Mammary epithelial cell (primary cell): ENCODE measurements at regions of chr1 and their contacts with region 1.

Region 1: GRCh38 chr1:204104133-204104871 is 31.4 kb downstream of the SOX13 start:
- DNase-seq: peak; percentile 17
- H3K4me3 ChIP-seq: no peak overlapping the region
- H3K27ac ChIP-seq: no peak overlapping the region
- H3K4me1 ChIP-seq: peaks cover 35% of the 10 kb centered on the region
- H3K27me3 ChIP-seq: no peaks in the 10 kb centered on the region
- CTCF ChIP-seq: no peak

Region 2: GRCh38 chr1:204003529-204003928 is 100.8 kb before region 1 on chr1:
- CTCF ChIA-PET with region 1: no interaction called
- dilution Hi-C with region 1: loop called (anchors 5 kb)
- in situ Hi-C with region 1: no loop called
- intact Hi-C with region 1: no loop called
- DNase-seq: no peak
- H3K4me3 ChIP-seq: no peak overlapping the region
- H3K27ac ChIP-seq: no peak overlapping the region
- H3K4me1 ChIP-seq: no peaks in the 10 kb centered on the region
- H3K27me3 ChIP-seq: no peaks in the 10 kb centered on the region
- CTCF ChIP-seq: no peak

Region 3: GRCh38 chr1:204041232-204041767 is 63.0 kb before region 1 on chr1:
- CTCF ChIA-PET with region 1: no interaction called
- dilution Hi-C with region 1: loop called (anchors 5 kb)
- in situ Hi-C with region 1: no loop called
- intact Hi-C with region 1: no loop called
- DNase-seq: no peak
- H3K4me3 ChIP-seq: no peak overlapping the region
- H3K27ac ChIP-seq: no peak overlapping the region
- H3K4me1 ChIP-seq: peaks cover 11% of the 10 kb centered on the region
- H3K27me3 ChIP-seq: no peaks in the 10 kb centered on the region
- CTCF ChIP-seq: no peak

Region 4: GRCh38 chr1:204065174-204065985 is 38.9 kb before region 1 on chr1:
- CTCF ChIA-PET with region 1: no interaction called
- dilution Hi-C with region 1: no loop called
- in situ Hi-C with region 1: no loop called
- intact Hi-C with region 1: no loop called
- DNase-seq: no peak
- H3K4me3 ChIP-seq: no peak overlapping the region
- H3K27ac ChIP-seq: no peak overlapping the region
- H3K4me1 ChIP-seq: no peaks in the 10 kb centered on the region
- H3K27me3 ChIP-seq: no peaks in the 10 kb centered on the region
- CTCF ChIP-seq: no peak

Region 5: GRCh38 chr1:204080163-204080903 is 24.0 kb before region 1 on chr1:
- CTCF ChIA-PET with region 1: no interaction called
- dilution Hi-C with region 1: no loop called
- in situ Hi-C with region 1: no loop called
- intact Hi-C with region 1: loop called (anchors 2 kb)
- DNase-seq: peak; percentile 90
- H3K4me3 ChIP-seq: peak overlapping the region in 1 of 3 experiments; percentile 12
- H3K27ac ChIP-seq: no peak overlapping the region
- H3K4me1 ChIP-seq: peaks cover 32% of the 10 kb centered on the region
- H3K27me3 ChIP-seq: no peaks in the 10 kb centered on the region
- CTCF ChIP-seq: no peak

Region 6: DNA sequence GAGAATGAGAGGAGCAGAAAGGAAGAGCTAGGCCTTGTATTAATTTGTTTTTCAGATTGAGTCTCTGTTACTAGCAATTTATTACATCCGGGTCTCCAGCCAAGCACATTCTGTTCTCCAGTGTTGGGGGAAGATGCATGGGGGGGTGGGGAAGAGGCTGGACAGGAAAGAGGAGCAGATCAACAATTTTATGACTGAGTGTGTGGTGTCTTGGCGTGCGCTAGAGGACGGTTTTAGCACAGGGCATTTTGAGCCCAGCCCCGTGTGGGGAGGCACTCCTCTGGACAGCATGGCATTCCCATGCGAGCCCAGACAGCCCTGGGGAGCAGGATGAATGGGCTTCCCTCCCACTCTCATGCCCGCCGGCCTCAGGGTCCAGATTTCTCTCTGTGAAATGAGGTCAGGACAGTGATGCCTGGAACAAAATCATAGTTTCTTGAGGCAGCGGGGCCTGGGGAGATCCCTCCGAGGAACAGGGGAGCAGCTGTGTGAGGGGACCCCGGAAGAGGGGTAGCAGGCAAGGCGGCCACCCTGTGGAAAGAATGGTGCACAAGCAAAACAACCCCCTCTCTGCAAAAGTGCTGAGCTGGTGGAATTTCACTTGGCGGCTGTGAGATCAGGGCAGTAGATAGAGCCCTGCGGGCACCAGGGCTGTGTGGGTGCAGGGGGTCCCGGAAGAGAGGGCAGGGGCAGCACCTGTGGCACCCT is 15.1 kb before region 1 on chr1:
- CTCF ChIA-PET with region 1: no interaction called
- dilution Hi-C with region 1: no loop called
- in situ Hi-C with region 1: no loop called
- intact Hi-C with region 1: loop called (anchors 2 kb)
- DNase-seq: peak; percentile 52
- H3K4me3 ChIP-seq: no peak overlapping the region
- H3K27ac ChIP-seq: peak overlapping the region; percentile 9
- H3K4me1 ChIP-seq: peaks cover 27% of the 10 kb centered on the region
- H3K27me3 ChIP-seq: no peaks in the 10 kb centered on the region
- CTCF ChIP-seq: peak; percentile 8 to 24